HEK293 (cell line): ENCODE measurements at regions of chr17 and their contacts with region 1.

Region 1: GRCh38 chr17:8118769-8119580 is 661 bp upstream of the ALOXE3 start:
- H3K4me3 ChIP-seq: peak overlapping the region; percentile 48
- H3K27ac ChIP-seq: peak overlapping the region; percentile 72
- H3K4me1 ChIP-seq: peaks cover 2% of the 10 kb centered on the region
- CTCF ChIP-seq: peak; percentile 90

Region 2: DNA sequence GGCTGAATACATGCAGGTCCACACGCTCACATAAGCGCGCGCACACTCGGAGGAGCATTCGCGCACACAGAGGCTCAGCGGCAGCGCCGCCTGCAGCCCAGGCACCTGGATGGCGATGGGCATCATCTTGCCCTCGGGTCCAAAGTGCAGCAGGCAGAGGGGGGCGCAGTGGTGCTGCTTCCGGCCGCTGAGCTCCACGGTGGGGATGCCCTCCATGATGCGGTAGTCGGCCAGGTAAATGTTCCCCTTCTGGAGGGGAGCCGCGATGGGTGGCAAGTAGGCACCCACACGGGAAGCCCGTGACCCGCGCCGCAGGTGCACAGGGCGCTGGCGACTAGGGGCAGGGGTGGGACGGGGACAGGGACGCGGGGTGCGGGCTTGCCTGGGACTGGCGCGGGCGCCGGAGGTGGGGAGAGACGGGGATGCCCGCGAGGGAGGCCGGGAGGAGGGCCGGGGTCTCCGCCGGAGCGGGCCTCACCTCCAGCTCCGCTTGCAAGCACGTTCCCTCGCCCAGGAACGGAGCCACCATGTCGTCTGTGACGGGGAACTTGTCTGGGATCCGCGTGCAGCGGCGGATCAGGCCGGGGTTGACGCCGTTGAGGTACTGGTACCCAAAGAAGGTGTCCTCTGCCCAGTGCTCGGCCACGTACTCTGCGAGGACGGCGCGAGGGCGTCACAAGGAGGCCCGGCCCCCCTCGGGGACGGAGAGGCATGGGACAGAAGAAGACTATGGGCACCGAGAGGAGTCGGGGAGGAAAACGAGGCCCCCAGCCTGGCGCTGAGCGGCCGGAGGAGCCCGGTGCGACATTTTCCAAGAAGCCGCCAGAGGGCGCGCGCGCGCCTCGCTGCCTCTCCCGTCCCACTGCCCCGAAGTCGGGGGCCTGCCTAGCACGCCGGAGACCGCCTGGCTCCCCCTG is 39.4 kb before region 1 on chr17:
- CTCF ChIA-PET with region 1: interaction called, 54 read pairs
- POLR2A ChIA-PET with region 1: interaction called, 7 read pairs
- H3K4me3 ChIP-seq: peak overlapping the region; percentile 55
- H3K27ac ChIP-seq: peak overlapping the region; percentile 79
- H3K4me1 ChIP-seq: peaks cover 7% of the 10 kb centered on the region
- CTCF ChIP-seq: peak; percentile 99

Region 3: GRCh38 chr17:8131844-8132441 is 13.0 kb after region 1 on chr17:
- CTCF ChIA-PET with region 1: interaction called, 33 read pairs
- POLR2A ChIA-PET with region 1: interaction called, 3 read pairs
- H3K4me3 ChIP-seq: no peak overlapping the region
- H3K27ac ChIP-seq: no peak overlapping the region
- H3K4me1 ChIP-seq: 0 out of 2 replicates have a peak, but pooled peaks cover 3% of the 10 kb centered on the region
- CTCF ChIP-seq: no peak

Region 4: GRCh38 chr17:8156246-8156992 is 37.4 kb after region 1 on chr17:
- CTCF ChIA-PET with region 1: interaction called, 38 read pairs
- POLR2A ChIA-PET with region 1: interaction called, 18 read pairs
- H3K4me3 ChIP-seq: peak overlapping the region; percentile 45
- H3K27ac ChIP-seq: peak overlapping the region; percentile 69
- H3K4me1 ChIP-seq: peaks cover 31% of the 10 kb centered on the region
- CTCF ChIP-seq: peak; percentile 34

Region 5: GRCh38 chr17:8209909-8210760 is 91.2 kb after region 1 on chr17 and contains the start of gene AURKB:
- CTCF ChIA-PET with region 1: interaction called, 4 read pairs
- POLR2A ChIA-PET with region 1: interaction called, 12 read pairs
- H3K4me3 ChIP-seq: peak within 1 kb of the TSS; percentile 76
- H3K27ac ChIP-seq: peak within 1 kb of the TSS; percentile 91
- H3K4me1 ChIP-seq: peaks cover 8% of the 10 kb centered on the region
- CTCF ChIP-seq: no peak

Region 6: GRCh38 chr17:8383143-8383822 is 264.3 kb after region 1 on chr17 and contains the start of gene RPL26:
- CTCF ChIA-PET with region 1: interaction called, 13 read pairs
- POLR2A ChIA-PET with region 1: no interaction called
- H3K4me3 ChIP-seq: peak within 1 kb of the TSS; percentile 90
- H3K27ac ChIP-seq: peak within 1 kb of the TSS; percentile 97
- H3K4me1 ChIP-seq: peaks cover 13% of the 10 kb centered on the region
- CTCF ChIP-seq: peak; percentile 98